Sciatic nerve (tissue), 2 donors: ENCODE measurements at regions of chr1 and their contacts with region 1.

Region 1: DNA sequence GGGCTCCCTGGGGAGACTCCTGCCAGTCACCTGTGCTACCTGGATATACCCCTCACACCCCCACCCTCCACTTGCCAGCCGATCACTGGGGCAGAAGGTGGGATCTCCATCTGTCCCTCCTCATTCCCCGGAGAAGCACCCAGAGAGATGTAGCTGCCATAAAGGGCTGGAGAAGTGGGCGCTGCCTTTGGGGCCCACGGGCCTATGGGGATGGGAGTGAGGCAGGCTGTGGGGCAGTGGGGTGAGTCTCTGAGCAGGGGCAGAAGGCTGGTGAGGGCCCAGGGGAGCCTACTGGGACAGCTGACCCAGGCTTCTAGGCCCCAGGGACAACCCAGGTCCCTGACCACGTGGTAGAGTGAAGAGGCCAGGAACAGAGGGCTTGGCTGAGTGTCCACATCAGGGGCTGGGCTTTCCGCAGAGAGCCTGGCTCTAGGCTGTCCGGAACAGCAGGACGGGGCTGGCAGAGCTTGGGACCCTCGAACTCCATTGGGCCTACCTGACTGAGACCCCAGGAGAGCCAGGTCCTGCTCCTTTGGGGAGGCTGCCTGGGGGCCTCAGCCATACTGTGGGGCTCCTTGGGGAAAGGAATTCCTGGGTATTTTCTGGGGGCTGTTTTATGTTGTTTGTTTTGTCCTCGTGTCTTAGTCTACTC is 205.9 kb upstream of the VAMP3 start:
- DNase-seq: no peak
- ATAC-seq: no peak

Region 2: GRCh38 chr1:7334475-7335035 is 230.7 kb before region 1 on chr1:
- intact Hi-C with region 1: loop called (anchors 5 kb)
- DNase-seq: no peak
- ATAC-seq: no peak

Region 3: GRCh38 chr1:7690496-7691182 is 125.4 kb after region 1 on chr1:
- intact Hi-C with region 1: no loop called
- DNase-seq: no peak
- ATAC-seq: no peak

Region 4: GRCh38 chr1:7755448-7755847 is 190.2 kb after region 1 on chr1:
- intact Hi-C with region 1: no loop called
- DNase-seq: no peak
- ATAC-seq: no peak